Posterior vena cava (tissue), 2 donors: ENCODE measurements at regions of chr17 and their contacts with region 1.

Region 1: DNA sequence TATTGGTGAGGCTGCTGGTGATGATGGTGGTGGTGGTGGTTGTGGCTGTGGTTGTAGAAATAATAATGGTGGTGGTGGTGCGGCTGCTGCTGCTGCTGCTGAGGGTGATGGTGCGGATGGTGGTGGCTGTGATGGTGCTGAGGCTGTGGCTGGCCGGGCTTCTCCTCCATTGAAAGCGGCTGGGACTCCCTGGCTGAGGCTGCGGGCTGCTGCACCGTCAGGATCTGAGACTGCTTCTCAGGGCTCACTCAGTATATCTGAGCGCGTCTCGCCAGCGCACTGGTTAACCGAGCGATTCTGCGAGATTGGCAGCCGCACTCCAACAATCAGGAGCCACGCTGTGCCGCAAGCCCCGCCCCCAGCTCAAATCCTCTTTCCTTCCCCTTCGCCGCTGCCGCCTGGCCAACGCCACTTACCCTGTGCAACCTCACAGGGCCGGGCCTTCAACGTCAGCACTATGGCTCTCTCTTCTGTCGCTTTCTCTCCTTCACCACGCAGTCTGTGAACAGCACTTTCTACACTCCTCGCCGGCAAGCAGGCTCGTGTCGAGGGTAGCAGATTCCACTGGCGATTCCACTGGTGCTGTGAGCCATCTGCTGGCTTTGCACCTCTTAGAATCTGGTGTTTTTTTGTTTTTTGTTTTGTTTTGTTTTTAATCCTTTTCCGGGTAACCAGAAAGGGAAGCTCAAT is at the start of gene NUFIP2:
- DNase-seq: peak; percentile 100
- total RNA-seq, gene NUFIP2: 39.6 to 46.9 TPM

Region 2: GRCh38 chr17:29155227-29155965 is 138.6 kb before region 1 on chr17:
- intact Hi-C with region 1: loop called in 1 of 2 experiments (anchors 10 kb)
- DNase-seq: peak; percentile 84

Region 3: DNA sequence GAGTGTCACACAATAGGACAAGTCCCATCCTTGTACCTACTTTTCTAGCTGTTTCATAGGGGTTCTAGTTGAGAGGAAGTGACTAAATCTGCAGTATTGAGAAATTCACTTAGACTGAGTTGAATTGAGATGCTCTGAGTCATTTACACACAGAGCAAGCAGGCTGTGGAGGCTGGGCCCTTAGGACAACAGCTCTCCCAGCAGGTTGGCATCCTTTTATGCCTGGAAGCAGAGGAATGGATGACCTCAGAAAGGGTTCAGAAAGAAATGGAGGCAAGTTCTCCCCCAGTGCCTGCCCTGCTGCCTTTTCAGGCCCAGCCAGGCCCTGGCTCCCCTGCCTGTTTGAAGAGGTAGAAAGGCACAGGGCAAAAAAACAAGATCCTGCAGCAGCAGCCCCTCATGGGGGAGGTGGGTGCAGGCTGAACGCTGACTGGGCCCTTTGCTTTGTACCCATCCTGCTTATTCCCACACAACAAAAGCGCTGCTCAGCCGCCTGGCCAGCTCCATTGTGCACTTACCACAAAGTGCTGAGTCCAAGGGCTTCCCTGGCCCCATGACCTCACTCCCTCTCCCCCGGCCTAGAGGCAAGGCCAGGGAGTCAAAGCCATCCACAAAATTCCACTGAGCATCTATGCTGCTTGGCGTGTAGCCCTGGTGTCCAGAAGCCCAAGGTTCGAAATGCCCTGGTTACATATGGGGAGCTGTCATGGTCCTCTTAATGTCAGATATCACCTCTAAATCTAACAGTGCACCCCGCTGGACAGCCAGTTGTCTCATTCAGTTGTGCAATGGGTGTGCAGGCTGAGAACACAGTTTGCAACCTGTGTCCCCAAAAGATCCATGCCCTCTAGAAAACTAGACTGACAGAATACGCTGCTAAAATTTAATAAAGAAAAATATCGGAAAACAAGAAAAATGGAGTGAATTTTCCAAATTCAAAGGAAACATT is 52.7 kb before region 1 on chr17:
- intact Hi-C with region 1: no loop called
- DNase-seq: peak; percentile 89